ENCODE measurements at regions of chr10 and their contacts with region 1.

Region 1: DNA sequence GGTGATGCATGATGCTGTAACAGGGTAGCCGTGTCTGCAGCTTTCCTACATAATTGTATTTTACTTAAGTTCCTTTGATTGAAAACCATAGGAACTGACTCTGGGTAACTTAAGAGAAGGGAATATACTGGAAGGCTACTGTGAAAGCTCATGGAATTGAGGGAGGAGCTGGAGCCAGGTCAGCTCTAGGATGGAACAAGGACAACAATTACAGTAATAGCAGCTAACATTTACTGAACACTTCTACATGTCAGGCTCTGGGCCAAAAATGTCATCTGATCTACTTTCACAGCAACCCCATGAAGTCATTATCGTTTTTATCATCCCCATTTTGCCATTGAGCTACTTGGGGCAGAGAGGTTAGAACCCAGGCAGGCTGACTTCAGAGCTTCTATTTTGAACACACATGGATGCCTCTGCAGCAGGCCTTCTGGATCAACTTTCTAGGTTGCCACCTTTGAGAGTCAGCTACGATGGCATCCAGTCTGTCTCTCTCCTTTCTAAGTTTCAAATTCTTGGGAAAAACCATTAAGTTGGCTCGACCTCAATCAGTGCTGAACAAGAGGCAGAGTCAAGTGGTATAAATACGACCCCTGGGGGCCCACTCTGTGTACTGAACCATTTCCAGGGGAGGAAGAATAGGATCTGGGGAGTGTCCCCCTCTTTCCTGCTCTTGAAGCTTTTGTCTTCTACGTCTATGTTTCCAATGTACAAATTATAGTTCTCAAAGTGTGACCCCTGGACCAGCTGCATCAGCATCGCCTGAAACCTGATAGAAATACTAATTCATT is 272.3 kb upstream of the PLPP4 start:
- DNase-seq: no peak
- H3K4me3 ChIP-seq: no peak overlapping the region
- H3K27ac ChIP-seq: no peak overlapping the region
- H3K4me1 ChIP-seq: peaks cover 0 to 3% (median 0%) of the 10 kb centered on the region in 4 experiments; a peak in 1 of 7 replicates
- H3K27me3 ChIP-seq: no peaks in the 10 kb centered on the region
- CTCF ChIP-seq: peak; percentile 29 to 49 (median 42)
- EP300 ChIP-seq: no peak
- POLR2A ChIP-seq: no peak
- RAD21 ChIP-seq: peak; percentile 80 to 85

Region 2: DNA sequence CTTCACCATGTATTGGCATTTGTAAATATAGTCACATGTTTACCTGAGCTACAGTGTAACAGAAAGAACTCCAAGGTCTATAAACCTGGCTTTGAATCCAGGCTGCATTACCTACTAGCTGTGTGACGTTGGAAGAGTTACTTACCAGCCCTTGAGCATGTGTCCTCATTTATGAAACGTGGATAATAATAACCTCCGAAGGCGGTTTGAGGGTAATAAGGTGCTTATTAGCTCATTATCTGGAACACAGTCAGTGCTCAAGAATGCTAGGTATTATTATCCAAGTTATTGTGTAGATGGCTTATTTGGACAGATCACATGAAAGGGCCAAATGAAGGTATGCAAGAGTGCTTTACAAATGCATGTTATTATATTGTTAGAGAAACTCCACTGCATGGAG is 227.3 kb before region 1 on chr10:
- CTCF ChIA-PET with region 1: interaction called, 11 read pairs
- POLR2A ChIA-PET with region 1: no interaction called
- DNase-seq: no peak
- H3K4me3 ChIP-seq: no peak overlapping the region
- H3K27ac ChIP-seq: no peak overlapping the region
- H3K4me1 ChIP-seq: no peaks in the 10 kb centered on the region
- H3K27me3 ChIP-seq: no peaks in the 10 kb centered on the region
- CTCF ChIP-seq: no peak
- EP300 ChIP-seq: no peak
- POLR2A ChIP-seq: no peak
- RAD21 ChIP-seq: no peak

Region 3: DNA sequence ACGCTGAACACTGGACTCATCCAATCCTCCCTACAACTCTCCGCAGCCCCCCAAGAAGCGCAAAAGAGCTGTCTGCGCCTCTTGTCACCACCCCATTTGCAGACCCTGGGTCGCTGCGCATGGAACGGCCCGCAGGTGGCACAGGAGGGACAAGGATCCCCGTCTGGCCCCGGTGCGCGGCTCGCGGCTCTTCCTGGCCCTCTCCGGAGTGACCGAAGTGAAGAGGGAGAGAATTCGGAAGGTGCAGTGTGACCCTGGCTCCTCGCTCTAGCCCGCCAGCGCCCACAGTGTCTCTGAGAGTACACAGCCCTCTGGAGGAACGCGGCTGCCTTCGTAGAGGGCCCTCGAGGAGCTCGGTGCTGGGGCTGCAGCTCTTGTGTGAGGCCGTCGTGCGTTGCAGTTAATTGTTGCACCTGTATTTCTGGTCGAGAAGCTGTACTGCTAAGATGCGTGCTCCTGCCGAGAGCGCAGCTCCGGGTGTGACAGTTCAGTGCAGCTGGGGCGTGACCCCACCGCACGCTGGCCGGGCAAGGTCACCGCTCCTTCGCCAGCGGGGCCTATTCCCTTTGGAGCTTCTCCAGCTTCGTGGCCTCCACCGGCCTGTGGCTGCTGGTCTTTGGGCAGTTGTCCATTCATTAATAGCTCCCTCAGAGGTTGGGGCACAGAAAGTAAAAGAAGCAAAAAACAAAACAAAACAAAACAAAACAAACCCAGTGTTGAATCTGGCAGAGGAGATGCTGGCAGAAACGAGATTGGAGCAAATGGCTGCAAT is 173.2 kb before region 1 on chr10:
- CTCF ChIA-PET with region 1: interaction called, 30 read pairs
- POLR2A ChIA-PET with region 1: interaction called, 3 read pairs
- DNase-seq: peak; percentile 23 to 81
- H3K4me3 ChIP-seq: no peak overlapping the region
- H3K27ac ChIP-seq: no peak overlapping the region
- H3K4me1 ChIP-seq: no peaks in the 10 kb centered on the region
- H3K27me3 ChIP-seq: no peaks in the 10 kb centered on the region
- CTCF ChIP-seq: peak; percentile 30 to 49 (median 47)
- EP300 ChIP-seq: no peak
- POLR2A ChIP-seq: no peak
- RAD21 ChIP-seq: peak; percentile 60 to 78

Measured in H1 (cell line).